KBM-7 (cell line): ENCODE measurements at regions of chr17 and their contacts with region 1.

Region 1: GRCh38 chr17:58112970-58113631 is 29.9 kb downstream of the DYNLL2 start:
- DNase-seq: peak; percentile 79

Region 2: DNA sequence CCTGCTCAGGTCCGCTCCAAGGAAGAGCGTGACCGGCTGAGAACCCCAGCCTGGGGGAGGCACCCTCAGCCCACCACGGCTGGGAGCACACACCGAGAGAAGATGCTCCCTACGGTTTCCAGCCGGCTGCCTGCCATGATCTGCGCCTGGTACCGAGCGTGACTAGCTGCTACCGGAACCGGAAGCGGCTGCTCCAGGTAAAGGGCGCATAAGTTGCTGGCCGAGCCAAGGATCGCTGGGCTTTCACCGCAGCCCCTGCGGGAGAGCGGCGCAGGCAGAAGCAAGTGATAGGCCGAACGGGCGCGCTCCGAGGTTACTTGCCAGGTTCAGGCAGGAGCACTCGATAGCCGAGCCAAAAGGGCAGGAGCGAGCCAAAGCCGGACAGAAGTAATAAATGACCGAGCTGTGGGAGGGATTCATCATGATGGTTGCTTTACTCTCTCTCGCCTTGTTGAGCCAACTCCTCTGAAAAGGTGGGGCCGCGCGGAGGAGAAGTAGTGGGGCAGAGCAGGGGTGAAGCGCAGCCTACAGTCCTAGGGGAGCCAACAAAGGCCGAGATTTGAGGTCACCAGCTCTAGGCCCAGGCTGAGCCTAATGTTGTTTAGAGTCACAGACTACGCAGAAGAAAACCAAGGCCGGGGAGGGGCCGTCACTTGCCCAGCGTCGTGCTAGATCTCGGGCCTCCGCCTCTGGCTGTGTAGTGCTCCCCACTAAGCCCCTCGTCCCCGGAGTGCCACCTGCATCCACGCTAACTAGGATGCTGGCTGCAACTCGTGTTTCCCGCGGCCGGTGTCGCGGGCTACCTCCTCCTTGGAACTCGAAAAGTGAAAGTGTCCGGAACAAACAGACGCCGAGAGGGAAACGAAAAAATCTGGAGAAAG is 263.0 kb before region 1 on chr17 and contains the start of gene MRPS23:
- in situ Hi-C with region 1: loop called (anchors 25 kb)
- DNase-seq: peak; percentile 98

Region 3: DNA sequence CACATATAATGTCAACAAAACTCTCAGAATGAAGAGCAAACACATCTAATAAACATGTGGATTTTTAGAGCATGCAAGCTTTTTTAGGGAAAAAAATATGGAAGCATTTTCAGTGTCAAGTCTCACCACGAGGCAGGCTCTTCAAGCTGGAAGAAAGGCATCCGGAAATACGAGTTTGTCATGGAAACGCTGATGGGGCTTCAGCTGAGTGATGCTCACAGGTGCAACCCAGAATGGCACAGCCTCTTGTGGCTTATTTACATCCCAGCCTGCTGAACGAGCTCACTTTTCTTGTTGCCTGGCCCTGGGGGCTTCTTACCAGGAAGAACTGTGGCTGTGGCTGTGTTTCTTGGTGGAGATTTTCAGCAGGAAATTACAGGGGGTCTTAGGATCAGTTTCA is 54.0 kb before region 1 on chr17:
- in situ Hi-C with region 1: no loop called
- DNase-seq: no peak

Region 4: DNA sequence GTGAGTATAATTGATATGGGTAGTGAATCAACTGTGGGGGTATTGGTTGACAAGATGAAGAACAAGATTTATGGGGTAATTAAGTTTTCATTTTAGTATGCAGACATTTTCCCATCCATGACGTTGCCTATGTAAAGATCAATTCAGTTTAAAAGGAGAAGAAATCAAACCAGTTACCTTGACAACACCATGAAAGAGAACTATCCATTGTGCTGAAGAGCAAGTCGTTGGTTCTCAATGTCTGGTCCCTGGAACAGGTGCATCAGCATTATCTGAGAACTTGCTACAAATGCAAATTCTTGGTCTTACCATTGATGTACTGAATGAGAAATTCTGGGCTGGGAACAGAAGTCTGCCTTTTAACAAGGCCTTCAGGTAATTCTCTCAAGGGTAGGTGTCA is 52.9 kb after region 1 on chr17:
- in situ Hi-C with region 1: no loop called
- DNase-seq: no peak